Panc1 (cell line): ENCODE measurements at regions of chr22 and their contacts with region 1.

Region 1: DNA sequence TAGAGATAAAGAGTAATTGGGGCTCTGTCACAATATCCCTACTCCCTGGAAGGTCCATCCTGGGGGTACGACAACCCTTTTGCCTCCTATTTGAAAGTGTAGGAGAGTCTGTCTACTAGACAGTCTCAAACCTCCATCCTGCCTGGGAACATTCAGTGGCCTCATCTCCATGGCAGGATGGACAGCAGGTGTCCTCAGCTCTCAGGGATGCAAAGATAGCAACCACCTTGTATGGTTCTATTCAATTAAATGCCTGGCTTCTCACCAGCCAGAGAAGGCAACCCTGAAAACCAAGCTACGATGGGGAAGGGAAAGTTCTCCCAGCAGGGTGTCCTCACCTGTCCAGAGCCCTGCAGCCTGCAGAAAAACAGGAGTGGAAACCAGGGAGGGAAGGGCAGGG is 164.9 kb downstream of the MIAT start:
- DNase-seq: no peak
- ATAC-seq: no peak
- H3K4me3 ChIP-seq: no peak overlapping the region
- H3K27ac ChIP-seq: no peak overlapping the region
- H3K4me1 ChIP-seq: no peaks in the 10 kb centered on the region
- H3K27me3 ChIP-seq: no peaks in the 10 kb centered on the region
- CTCF ChIP-seq: no peak

Region 2: DNA sequence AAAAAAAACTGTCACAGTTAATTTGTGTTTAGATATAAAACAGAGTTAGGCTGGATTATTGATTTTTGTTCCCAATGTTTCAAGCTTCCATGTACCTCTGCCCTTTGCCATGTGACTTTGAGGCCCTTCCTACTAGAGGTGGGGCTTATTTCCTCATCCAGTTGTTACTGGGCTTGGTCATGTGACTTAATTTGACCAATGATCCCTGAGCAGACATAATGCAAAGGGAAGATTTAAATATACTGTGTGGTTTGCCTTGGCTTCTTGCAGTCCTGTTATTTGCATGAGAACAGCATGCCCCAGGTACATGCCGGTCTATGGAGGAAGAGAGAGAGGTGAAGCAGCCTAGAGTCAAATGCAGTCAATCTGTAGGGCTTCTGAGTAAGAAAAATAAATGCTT is 182.1 kb after region 1 on chr22:
- CTCF ChIA-PET with region 1: no interaction called
- POLR2A ChIA-PET with region 1: no interaction called
- in situ Hi-C with region 1: no loop called
- intact Hi-C with region 1: no loop called
- DNase-seq: no peak
- ATAC-seq: no peak
- H3K4me3 ChIP-seq: no peak overlapping the region
- H3K27ac ChIP-seq: no peak overlapping the region
- H3K4me1 ChIP-seq: no peaks in the 10 kb centered on the region
- H3K27me3 ChIP-seq: no peaks in the 10 kb centered on the region
- CTCF ChIP-seq: no peak

Region 3: DNA sequence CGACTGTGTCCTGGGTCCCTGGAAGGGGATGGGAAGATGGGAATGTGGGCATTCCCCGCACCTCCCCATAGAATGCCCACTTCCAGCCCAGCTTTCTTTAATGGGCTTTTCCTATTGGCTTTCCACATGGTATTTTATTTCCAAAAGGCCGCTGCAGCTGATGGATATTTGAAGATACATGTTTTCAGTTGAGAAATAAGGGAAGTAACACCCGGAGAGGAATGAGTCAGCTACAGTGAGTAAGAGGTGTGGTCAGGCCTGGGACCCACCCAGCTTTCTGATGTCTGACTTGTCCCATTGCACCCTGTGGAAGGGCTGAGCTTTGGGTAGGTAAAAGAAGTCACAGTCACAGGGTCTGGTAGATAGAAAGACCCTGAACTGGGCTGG is 312.0 kb after region 1 on chr22:
- CTCF ChIA-PET with region 1: no interaction called
- POLR2A ChIA-PET with region 1: interaction called, 10 read pairs
- in situ Hi-C with region 1: no loop called
- intact Hi-C with region 1: no loop called
- DNase-seq: no peak
- ATAC-seq: no peak
- H3K4me3 ChIP-seq: no peak overlapping the region
- H3K27ac ChIP-seq: no peak overlapping the region
- H3K4me1 ChIP-seq: no peaks in the 10 kb centered on the region
- H3K27me3 ChIP-seq: no peaks in the 10 kb centered on the region; the same call in 1 of the 2 replicates
- CTCF ChIP-seq: no peak